Astrocyte of the cerebellum (primary cell): ENCODE measurements at regions of chr9 and their contacts with region 1.

Region 1: DNA sequence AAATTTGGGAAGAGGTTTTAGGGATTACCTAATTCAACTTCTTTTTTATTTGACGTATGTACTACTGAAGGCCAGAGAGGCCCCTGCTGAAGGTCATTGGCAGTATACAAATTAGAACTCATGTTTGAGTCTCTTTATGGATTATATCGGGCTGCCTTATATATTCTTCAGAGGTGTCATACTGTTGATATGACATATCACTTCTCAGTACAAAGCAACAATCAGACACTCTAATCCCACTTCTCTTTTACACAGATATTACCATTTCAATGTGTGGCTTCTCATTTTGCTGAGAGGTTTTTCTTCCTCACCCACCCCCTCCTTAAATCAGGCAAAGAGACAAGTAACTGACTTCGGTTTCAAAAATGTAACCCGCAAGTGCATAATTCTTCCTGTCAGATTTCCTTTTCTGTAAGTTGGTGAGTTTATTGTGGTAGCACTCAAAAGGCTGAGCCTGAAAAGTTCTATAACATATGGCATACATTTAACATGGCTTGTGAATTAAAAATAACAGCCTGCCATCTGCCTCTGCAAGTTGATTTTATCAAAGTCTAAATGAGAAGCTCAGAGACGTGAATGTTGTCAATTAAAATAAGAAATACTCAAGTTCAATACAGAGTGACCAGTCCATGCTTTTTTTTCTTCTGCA is 163.6 kb upstream of the RORB start:
- DNase-seq: no peak
- H3K4me3 ChIP-seq: no peak overlapping the region
- CTCF ChIP-seq: no peak

Region 2: DNA sequence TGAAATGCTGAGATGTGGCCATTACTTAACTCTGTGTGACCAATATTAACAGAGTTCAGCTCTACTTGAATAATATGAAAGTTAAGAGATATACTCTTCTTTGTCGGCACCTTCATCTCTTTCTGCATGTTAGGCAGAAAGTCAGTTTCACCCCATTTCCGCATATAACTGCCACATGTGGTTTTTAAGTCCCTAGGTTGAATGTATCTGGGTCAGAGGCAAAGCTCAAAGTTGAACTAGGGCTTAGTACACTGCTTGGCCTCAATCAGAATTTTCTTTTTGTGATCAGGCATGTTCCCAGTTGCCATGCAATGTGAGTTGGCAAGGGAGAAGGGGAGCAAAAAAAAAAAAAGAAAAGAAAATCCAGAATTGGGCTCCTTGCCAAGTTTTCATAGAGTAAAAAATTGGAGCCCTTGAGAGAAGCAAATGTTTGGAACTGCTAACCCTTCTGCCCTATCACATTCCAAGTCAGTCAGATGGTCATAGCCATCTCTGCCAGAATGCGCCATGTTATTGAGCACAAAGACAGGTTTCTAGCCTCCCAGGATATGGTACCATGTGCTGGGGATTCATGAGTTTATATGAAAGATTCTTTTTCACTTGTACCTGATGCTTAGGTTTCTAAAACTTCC is 87.5 kb before region 1 on chr9:
- in situ Hi-C with region 1: no loop called
- DNase-seq: no peak
- H3K4me3 ChIP-seq: no peak overlapping the region
- CTCF ChIP-seq: no peak

Region 3: GRCh38 chr9:74277532-74277931 is 56.0 kb before region 1 on chr9:
- in situ Hi-C with region 1: loop called (anchors 5 kb)
- DNase-seq: no peak
- H3K4me3 ChIP-seq: no peak overlapping the region
- CTCF ChIP-seq: no peak

Region 4: DNA sequence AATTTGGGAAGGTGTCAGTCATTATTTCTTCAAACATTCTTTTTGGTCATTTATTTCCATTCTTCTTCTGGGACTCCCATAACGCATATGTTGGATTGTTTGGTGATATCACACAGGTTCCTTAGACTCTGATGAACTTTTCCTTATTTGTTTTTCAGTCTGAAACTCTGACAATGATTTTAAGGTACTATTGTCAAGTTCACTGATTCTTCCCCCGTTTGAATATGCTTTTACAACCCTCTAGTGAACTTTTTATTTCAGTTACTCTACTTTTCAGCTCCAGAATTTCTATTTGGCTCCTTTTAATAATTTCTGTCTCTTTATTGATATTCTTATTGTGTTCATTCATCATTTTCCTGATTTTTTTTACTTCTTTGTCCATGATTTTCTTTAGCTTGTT is 71.1 kb after region 1 on chr9:
- in situ Hi-C with region 1: loop called (anchors 5 kb)
- DNase-seq: no peak
- H3K4me3 ChIP-seq: no peak overlapping the region
- CTCF ChIP-seq: no peak

Region 5: GRCh38 chr9:74696520-74696919 is 363.0 kb after region 1 on chr9:
- in situ Hi-C with region 1: no loop called
- DNase-seq: no peak
- H3K4me3 ChIP-seq: no peak overlapping the region
- CTCF ChIP-seq: no peak